Panc1 (cell line): ENCODE measurements at regions of chr1 and their contacts with region 1.

Region 1: GRCh38 chr1:149886396-149887195 is 12.8 kb upstream of the BOLA1 start:
- DNase-seq: peak; percentile 99
- ATAC-seq: peak; percentile 79
- H3K4me3 ChIP-seq: peak overlapping the region; percentile 91 to 95
- H3K27ac ChIP-seq: peak overlapping the region; percentile 99
- H3K4me1 ChIP-seq: peaks cover 15% of the 10 kb centered on the region
- H3K27me3 ChIP-seq: no peaks in the 10 kb centered on the region
- CTCF ChIP-seq: no peak

Region 2: DNA sequence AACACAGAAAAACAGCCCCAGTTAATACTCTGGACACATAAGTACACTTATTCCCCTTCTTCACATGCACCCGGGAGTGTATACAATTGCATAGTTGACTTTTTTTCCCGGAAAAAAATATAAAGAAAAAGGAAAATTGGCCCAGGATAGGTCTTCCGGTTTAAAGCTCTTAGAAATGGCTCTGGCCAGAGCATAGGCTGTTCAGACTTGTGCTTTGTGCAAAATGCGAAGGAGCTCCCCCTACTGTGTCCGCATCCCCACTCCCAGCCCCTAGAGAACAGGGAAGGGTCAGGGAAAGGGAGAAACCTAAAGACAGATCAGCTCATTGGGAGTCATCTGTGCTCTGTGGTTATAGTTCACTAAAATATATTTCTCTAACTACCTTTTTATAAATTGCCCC is 55.6 kb after region 1 on chr1:
- CTCF ChIA-PET with region 1: interaction called, 4 read pairs
- POLR2A ChIA-PET with region 1: no interaction called
- in situ Hi-C with region 1: no loop called
- intact Hi-C with region 1: loop called (anchors 5 kb)
- DNase-seq: no peak
- ATAC-seq: peak; percentile 57; the same call in 1 of the 2 replicates
- H3K4me3 ChIP-seq: no peak overlapping the region
- H3K27ac ChIP-seq: peak overlapping the region; percentile 59; the same call in 1 of the 2 replicates
- H3K4me1 ChIP-seq: peaks cover 51% of the 10 kb centered on the region
- H3K27me3 ChIP-seq: no peaks in the 10 kb centered on the region
- CTCF ChIP-seq: peak; percentile 74

Region 3: DNA sequence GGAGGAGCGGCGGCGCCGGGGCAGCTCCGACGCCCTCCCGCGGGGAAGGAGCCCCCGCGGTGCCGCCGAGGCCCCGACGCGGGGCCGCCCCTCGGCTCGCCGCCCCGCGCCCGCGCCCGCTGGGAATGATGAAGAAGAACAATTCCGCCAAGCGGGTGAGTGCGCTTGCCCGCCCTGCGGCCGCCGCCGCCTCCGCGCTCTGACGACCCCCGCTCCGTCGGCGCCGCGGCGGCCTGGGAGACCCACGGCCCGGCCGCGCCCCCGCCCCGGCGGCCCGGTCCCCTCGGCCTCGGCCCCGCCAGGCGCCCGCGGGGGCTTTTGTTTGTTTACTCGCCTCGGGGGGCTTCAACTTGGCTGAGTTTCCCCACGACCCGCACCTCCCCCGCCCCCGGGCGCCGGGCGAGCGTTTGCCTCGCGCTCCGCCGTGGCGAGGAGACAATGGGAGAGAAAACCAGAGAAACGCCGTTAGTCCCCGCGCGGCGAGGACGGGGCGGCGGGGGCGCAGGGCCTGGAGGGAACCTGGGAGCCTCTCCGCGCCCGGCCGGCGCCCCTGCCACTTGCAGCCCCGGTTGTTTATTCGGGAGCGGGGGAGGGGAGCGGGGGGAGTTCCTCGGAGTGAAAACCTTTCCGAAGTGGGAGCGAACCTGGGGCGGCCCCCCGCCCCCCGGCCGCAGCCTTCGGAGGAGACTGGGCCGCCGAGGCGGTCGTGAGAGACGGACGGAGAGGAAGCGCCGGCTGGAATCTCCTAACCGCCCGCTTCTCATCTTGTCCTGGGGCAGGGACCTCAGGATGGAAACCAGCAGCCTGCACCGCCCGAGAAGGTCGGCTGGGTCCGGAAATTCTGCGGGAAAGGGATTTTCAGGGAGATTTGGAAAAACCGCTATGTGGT is 263.8 kb after region 1 on chr1:
- CTCF ChIA-PET with region 1: no interaction called
- POLR2A ChIA-PET with region 1: no interaction called
- in situ Hi-C with region 1: no loop called
- intact Hi-C with region 1: no loop called
- DNase-seq: no peak
- ATAC-seq: no peak; the same call in 1 of the 2 replicates
- H3K4me3 ChIP-seq: peak overlapping the region; percentile 56 to 66
- H3K27ac ChIP-seq: peak overlapping the region; percentile 31; the same call in 1 of the 2 replicates
- H3K4me1 ChIP-seq: peaks cover 11% of the 10 kb centered on the region
- H3K27me3 ChIP-seq: no peaks in the 10 kb centered on the region
- CTCF ChIP-seq: no peak